ENCODE measurements at regions of chr1 and their contacts with region 1.

Region 1: GRCh38 chr1:45583264-45583665 is 576 bp upstream of the NASP start:
- DNase-seq: peak; percentile 84
- ATAC-seq: peak; percentile 79
- H3K4me3 Mint-ChIP-seq: peak overlapping the region; percentile 98
- H3K27ac Mint-ChIP-seq: peak overlapping the region; percentile 96
- H3K4me1 Mint-ChIP-seq: peaks cover 46% of the 10 kb centered on the region
- H3K27me3 Mint-ChIP-seq: no peaks in the 10 kb centered on the region
- CTCF ChIP-seq: no peak

Region 2: DNA sequence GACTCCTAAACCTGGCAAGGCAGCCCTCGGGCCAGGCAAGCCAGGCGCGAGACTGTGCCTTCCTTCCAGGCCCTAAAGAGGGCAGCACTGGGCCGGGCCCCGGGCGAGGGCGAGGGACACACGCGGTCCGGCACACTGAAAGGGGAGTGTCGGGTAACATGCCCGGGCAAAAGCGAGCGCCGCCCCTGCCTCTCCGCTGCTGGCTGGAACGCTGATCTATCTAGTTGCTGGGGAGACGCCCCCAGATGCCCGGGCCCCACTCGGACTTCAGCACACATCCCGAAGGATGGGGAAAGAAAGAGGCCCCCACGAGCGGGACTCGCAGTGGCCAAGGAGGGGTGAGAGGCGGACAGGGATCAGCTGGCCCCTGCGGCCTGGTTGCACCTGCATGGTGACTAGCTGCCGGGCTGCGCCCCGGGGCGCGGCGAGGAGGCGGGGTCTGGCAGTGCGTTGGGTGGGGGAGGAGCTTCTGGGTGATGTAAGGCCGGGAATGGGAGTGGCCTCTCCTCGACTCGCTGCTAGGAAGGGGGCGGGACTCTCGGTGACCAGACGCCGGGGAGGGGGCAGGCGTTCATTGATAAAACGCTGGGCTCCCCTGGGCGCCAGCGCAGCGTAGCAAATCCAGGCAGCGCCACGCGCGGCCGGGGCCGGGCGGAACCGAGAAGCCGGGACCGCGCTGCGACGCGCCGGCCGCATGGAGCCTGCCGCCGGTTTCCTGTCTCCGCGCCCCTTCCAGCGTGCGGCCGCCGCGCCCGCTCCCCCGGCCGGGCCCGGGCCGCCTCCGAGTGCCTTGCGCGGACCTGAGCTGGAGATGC is 783.3 kb before region 1 on chr1 and contains the start of gene PLK3:
- CTCF ChIA-PET with region 1: no interaction called
- POLR2A ChIA-PET with region 1: interaction called, 5 read pairs
- intact Hi-C with region 1: loop called (anchors 10 kb)
- DNase-seq: peak; percentile 94
- ATAC-seq: peak; percentile 88
- H3K4me3 Mint-ChIP-seq: peak within 1 kb of the TSS; percentile 97
- H3K27ac Mint-ChIP-seq: peak within 1 kb of the TSS; percentile 100
- H3K4me1 Mint-ChIP-seq: peaks cover 33% of the 10 kb centered on the region
- H3K27me3 Mint-ChIP-seq: no peaks in the 10 kb centered on the region
- CTCF ChIP-seq: peak; percentile 30
- total RNA-seq, gene PLK3: 63.0 and 82.0 TPM in 2 replicates

Region 3: GRCh38 chr1:45385302-45385701 is 198.0 kb before region 1 on chr1:
- CTCF ChIA-PET with region 1: no interaction called
- POLR2A ChIA-PET with region 1: no interaction called
- intact Hi-C with region 1: no loop called
- DNase-seq: no peak
- ATAC-seq: no peak
- H3K4me3 Mint-ChIP-seq: no peak overlapping the region
- H3K27ac Mint-ChIP-seq: no peak overlapping the region
- H3K4me1 Mint-ChIP-seq: no peaks in the 10 kb centered on the region
- H3K27me3 Mint-ChIP-seq: no peaks in the 10 kb centered on the region
- CTCF ChIP-seq: no peak

Region 4: GRCh38 chr1:45490626-45491486 is 92.4 kb before region 1 on chr1 and contains the start of gene TESK2:
- CTCF ChIA-PET with region 1: interaction called, 4 read pairs
- POLR2A ChIA-PET with region 1: interaction called, 18 read pairs
- intact Hi-C with region 1: loop called (anchors 1 kb)
- DNase-seq: peak; percentile 95
- ATAC-seq: peak; percentile 89
- H3K4me3 Mint-ChIP-seq: no peak within 1 kb of the TSS
- H3K27ac Mint-ChIP-seq: no peak within 1 kb of the TSS
- H3K4me1 Mint-ChIP-seq: peaks cover 12% of the 10 kb centered on the region
- H3K27me3 Mint-ChIP-seq: no peaks in the 10 kb centered on the region
- CTCF ChIP-seq: no peak
- total RNA-seq, gene TESK2: 11.7 and 12.2 TPM in 2 replicates

Region 5: GRCh38 chr1:45521398-45522323 is 61.6 kb before region 1 on chr1 and contains the start of gene PRDX1:
- CTCF ChIA-PET with region 1: interaction called, 3 read pairs
- POLR2A ChIA-PET with region 1: interaction called, 115 read pairs
- intact Hi-C with region 1: loop called (anchors 1 kb)
- DNase-seq: peak; percentile 98
- ATAC-seq: peak; percentile 87
- H3K4me3 Mint-ChIP-seq: peak within 1 kb of the TSS; percentile 93
- H3K27ac Mint-ChIP-seq: peak within 1 kb of the TSS; percentile 92
- H3K4me1 Mint-ChIP-seq: peaks cover 49% of the 10 kb centered on the region
- H3K27me3 Mint-ChIP-seq: no peaks in the 10 kb centered on the region
- CTCF ChIP-seq: no peak
- total RNA-seq, gene PRDX1: 351 and 413 TPM in 2 replicates

Region 6: DNA sequence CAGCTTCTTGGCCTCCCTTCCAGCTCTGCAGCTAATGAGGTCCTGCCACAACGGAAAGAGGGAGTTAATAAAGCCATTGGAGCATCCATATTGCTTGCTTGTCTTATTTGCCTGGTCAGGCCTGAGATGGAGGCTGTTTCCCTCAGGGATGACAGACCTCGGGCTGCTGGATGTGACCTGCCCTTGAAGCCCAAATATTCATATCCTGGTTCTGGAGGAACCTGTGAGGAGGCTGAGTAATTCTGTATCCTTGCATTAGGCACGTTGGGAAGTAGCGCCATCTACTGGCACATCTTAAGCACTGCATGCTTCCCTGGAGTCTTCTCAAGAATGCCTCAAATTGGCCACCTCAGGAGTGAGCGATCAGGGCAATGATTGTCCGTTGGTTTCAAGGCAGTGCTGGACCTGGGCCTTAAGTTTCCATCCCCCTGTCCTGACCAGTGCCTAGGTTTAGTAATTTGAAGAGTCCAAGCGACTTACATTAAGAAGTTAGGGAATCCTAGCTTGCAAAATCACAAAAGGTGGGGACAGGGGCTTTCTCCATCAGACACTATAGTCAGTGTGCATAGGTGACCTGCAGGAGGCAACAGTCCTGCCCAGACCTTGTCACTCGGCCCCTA is 13.2 kb before region 1 on chr1:
- CTCF ChIA-PET with region 1: interaction called, 39 read pairs
- POLR2A ChIA-PET with region 1: interaction called, 11 read pairs
- intact Hi-C with region 1: loop called (anchors 2 kb)
- DNase-seq: peak; percentile 48
- ATAC-seq: peak; percentile 98
- H3K4me3 Mint-ChIP-seq: no peak overlapping the region
- H3K27ac Mint-ChIP-seq: no peak overlapping the region
- H3K4me1 Mint-ChIP-seq: no peaks in the 10 kb centered on the region
- H3K27me3 Mint-ChIP-seq: no peaks in the 10 kb centered on the region
- CTCF ChIP-seq: peak; percentile 17

Region 7: DNA sequence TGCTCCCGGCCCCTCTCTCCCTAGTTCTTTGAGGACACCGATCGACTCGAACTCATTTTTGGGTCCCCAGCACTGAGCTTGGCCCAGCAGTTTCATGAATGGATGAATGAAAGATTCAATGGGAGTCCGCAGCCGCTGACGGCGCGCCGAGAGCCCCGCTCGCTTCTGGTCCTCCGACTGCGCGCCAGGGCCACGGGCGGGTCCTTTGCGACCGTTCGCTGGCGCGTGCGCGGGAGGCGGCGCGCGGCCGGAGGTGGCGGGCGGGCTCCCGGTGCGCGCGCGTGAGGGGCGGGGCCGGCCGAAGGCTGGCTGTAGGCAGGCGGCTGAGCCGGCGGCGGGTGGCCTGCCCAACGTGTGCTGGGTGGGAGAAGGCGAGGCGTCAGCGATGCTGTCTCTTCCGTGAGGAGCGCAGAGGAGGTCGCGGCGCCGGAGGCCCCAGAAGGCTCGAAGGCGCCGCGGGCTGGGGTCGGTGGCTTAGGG is 220.1 kb after region 1 on chr1 and contains the start of gene MAST2:
- CTCF ChIA-PET with region 1: no interaction called
- POLR2A ChIA-PET with region 1: no interaction called
- intact Hi-C with region 1: loop called (anchors 5 kb)
- DNase-seq: peak; percentile 91
- ATAC-seq: peak; percentile 96
- H3K4me3 Mint-ChIP-seq: peak within 1 kb of the TSS; percentile 92
- H3K27ac Mint-ChIP-seq: peak within 1 kb of the TSS; percentile 69
- H3K4me1 Mint-ChIP-seq: peaks cover 18% of the 10 kb centered on the region
- H3K27me3 Mint-ChIP-seq: no peaks in the 10 kb centered on the region
- CTCF ChIP-seq: no peak
- total RNA-seq, gene MAST2: 16.2 and 20.9 TPM in 2 replicates